Left lung (tissue), 14 donors: ENCODE measurements at regions of chr10 and their contacts with region 1.

Region 1: DNA sequence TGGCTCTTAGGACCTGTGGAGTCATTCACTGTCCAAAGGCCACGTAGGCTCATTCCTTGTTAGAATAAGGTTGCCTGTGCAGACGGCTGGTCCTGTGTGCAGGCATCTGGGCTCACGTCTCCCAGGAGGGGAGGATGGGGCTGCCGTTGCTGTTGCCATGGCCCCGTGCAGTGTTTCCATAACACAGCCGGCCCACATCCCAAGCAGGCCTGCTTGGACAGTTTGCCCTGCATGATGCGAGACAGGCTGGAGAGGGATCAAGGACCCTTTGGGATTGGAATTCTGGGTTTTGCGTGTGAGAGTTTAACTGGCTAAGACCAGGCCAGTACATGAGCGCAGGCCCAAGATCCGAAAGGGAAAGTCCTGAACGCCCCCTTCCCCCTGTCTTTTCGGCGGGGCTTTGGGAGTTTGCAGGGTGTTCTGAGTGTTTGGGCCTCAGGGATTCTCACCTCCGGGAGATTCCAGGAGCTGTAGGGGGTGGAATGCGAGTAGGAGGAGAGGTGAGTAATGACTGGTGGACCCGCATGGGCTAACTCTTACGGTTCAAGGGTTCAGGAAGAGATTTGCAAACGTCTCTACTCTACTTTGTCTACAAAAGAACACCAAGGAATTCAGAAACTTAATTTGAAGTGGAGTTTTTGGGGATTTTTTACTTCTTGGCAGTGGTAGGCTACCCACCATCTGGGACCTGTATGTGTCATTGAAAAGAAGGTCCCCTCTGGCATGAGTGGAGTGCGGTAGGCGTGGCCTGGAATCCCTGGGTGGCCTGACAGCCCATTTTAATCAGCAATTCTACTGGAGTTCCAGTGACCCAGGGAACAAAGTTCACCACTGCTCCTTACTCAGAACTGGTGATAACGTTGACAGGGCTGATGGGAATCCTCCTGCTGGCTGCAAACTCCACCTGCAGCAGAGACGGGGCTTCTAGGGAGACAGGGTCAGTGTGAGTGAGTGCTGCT is 125.3 kb downstream of the ITIH5 start:
- DNase-seq: peak in 3 of 4 donors; percentile 61 to 93 (median 90)
- ATAC-seq: peak; percentile 81
- H3K4me3 ChIP-seq: no peak overlapping the region
- H3K27ac ChIP-seq: peak overlapping the region in 1 of 2 donors; percentile 67
- H3K4me1 ChIP-seq: peaks cover 0 to 7% of the 10 kb centered on the region in 2 donors
- H3K27me3 ChIP-seq: no peaks in the 10 kb centered on the region
- CTCF ChIP-seq: no peak

Region 2: DNA sequence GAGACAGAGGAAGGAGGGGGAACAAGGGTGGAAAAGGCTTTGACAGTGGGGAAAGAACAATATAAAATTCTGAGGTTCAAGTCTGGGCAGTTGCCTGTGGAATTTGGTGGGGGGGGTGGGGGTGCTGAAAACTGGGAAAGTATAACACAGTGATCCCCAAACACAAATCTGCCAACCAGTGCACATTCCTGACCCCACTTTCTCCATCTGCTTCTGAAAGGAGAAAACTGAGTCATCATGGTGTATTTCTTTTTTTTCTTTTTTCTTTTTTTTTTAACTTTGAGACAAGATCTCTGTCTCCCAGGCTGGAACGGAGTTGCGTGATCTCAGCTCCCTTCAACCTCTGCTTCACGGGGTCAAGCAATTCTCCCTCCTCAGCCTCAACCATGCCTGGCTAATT is 129.7 kb after region 1 on chr10:
- intact Hi-C with region 1: loop called in 1 of 2 experiments (anchors 10 kb)
- DNase-seq: no peak
- ATAC-seq: no peak
- H3K4me3 ChIP-seq: no peak overlapping the region
- H3K27ac ChIP-seq: no peak overlapping the region
- H3K4me1 ChIP-seq: peaks cover 0 to 6% of the 10 kb centered on the region in 2 donors
- H3K27me3 ChIP-seq: peaks cover 0 to 40% of the 10 kb centered on the region in 2 donors
- CTCF ChIP-seq: no peak